ENCODE measurements at regions of chr11 and their contacts with region 1.

Region 1: GRCh38 chr11:46308631-46309419 is 31.4 kb downstream of the CREB3L1 start:
- DNase-seq: peak; percentile 75
- ATAC-seq: peak; percentile 78
- H3K4me3 Mint-ChIP-seq: no peak overlapping the region
- H3K27ac Mint-ChIP-seq: no peak overlapping the region
- H3K4me1 Mint-ChIP-seq: peaks cover 16% of the 10 kb centered on the region
- H3K27me3 Mint-ChIP-seq: peaks cover 3% of the 10 kb centered on the region

Region 2: GRCh38 chr11:46249103-46249937 is 59.5 kb before region 1 on chr11:
- CTCF ChIA-PET with region 1: interaction called, 366 read pairs
- POLR2A ChIA-PET with region 1: interaction called, 3 read pairs
- DNase-seq: no peak
- ATAC-seq: no peak
- H3K4me3 Mint-ChIP-seq: no peak overlapping the region
- H3K27ac Mint-ChIP-seq: no peak overlapping the region
- H3K4me1 Mint-ChIP-seq: peaks cover under 1% of the 10 kb centered on the region
- H3K27me3 Mint-ChIP-seq: no peaks in the 10 kb centered on the region

Region 3: GRCh38 chr11:46278387-46279125 is 30.3 kb before region 1 on chr11:
- CTCF ChIA-PET with region 1: interaction called, 29 read pairs
- POLR2A ChIA-PET with region 1: no interaction called
- DNase-seq: peak; percentile 27
- ATAC-seq: no peak
- H3K4me3 Mint-ChIP-seq: no peak overlapping the region
- H3K27ac Mint-ChIP-seq: no peak overlapping the region
- H3K4me1 Mint-ChIP-seq: no peaks in the 10 kb centered on the region
- H3K27me3 Mint-ChIP-seq: peaks cover 39% of the 10 kb centered on the region

Region 4: GRCh38 chr11:46295312-46296058 is 13.3 kb before region 1 on chr11:
- CTCF ChIA-PET with region 1: interaction called, 45 read pairs
- POLR2A ChIA-PET with region 1: no interaction called
- DNase-seq: peak; percentile 75
- ATAC-seq: peak; percentile 100
- H3K4me3 Mint-ChIP-seq: peak overlapping the region; percentile 79
- H3K27ac Mint-ChIP-seq: no peak overlapping the region
- H3K4me1 Mint-ChIP-seq: peaks cover 7% of the 10 kb centered on the region
- H3K27me3 Mint-ChIP-seq: peaks cover 27% of the 10 kb centered on the region

Region 5: DNA sequence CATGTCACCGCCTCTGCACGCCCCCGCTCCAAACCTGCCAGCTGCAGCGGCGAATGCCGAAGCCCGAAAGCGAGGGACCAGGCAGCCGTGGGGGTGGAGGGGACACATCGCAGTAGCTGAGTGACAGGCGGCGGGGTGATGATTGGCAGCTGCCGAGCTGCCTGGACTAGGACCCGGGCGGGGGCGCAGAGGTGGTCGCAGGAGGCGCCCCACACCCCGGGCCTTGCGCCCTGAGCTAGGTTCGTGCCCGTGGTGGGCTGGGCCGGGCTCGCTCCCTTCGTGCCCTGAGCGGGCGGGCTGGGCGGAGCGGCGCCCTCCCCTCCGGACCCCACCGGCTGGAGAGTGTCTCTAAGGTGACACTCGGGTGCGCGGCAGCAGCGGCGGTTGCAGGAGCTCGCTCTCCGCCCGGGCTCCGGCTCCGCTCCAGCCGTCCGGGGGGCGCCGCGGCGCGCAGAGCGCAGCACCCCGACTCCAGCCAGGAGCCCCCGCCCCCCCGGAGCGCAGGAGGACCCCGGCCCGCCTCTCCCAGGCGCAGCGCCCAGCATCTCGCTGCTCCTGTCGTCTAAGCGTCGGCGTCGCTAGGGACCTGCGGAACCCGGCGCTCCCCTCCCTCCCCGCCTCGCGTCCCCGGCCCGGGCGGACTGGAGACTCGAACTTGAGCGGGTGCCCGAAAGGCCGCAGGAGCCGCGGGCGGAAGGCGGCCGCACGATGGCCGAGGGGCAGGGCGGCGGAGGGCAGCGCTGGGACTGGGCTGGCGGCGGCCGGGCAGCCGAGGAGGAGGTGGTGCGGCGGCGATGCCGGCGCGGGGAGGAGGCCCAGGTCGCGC is 24.0 kb after region 1 on chr11:
- CTCF ChIA-PET with region 1: interaction called, 92 read pairs
- POLR2A ChIA-PET with region 1: no interaction called
- DNase-seq: no peak
- ATAC-seq: peak; percentile 43
- H3K4me3 Mint-ChIP-seq: peak overlapping the region; percentile 34
- H3K27ac Mint-ChIP-seq: no peak overlapping the region
- H3K4me1 Mint-ChIP-seq: peaks cover 46% of the 10 kb centered on the region
- H3K27me3 Mint-ChIP-seq: peaks cover 47% of the 10 kb centered on the region